H1 (cell line): ENCODE measurements at regions of chr5 and their contacts with region 1.

Region 1: DNA sequence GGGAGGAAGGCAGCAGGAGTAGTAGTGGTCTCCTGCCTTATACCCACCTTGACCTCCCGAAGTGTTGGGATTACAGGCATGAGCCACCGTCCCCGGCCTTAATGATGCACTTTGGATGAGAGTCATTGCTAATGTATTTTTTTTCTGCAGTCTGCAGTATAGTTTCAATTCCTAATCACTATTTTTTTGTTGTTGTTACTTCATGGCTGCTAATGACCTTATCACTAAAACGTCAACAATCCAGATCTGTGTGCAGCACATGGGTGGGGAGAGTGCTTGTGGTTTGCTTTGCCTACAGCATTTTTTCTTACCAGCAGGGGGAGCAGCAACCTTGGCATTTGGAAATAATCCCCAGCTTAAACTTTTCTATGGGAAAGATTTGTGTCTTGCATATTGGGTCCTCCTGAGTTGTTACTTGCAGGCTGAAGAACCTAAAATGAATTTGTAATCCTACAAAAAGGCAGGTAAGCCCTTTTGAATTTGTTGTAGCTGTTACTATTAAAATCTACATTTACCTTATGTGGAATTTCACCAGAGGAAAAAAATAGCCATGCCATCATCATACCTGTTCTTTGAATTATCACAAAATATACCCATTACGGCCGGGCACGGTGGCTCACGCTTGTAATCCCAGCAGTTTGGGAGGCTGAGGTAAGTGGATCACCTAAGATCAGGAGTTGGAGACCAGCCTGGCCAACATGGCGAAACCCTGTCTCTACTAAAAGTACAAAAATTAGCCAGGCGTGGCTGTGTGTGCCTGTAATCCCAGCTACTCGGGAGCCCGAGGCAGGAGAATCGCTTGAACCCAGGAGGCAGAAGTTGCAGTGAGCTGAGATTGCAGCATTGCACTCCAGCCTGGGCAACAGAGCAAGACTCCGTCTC is 6.3 kb upstream of the MED7 start:
- DNase-seq: peak; percentile 21 to 79
- H3K4me3 ChIP-seq: no peak overlapping the region
- H3K27ac ChIP-seq: no peak overlapping the region
- H3K4me1 ChIP-seq: no peaks in the 10 kb centered on the region
- H3K27me3 ChIP-seq: no peaks in the 10 kb centered on the region
- CTCF ChIP-seq: peak; percentile 47 to 82 (median 73)
- EP300 ChIP-seq: no peak
- POLR2A ChIP-seq: no peak
- RAD21 ChIP-seq: peak; percentile 77 to 82

Region 2: DNA sequence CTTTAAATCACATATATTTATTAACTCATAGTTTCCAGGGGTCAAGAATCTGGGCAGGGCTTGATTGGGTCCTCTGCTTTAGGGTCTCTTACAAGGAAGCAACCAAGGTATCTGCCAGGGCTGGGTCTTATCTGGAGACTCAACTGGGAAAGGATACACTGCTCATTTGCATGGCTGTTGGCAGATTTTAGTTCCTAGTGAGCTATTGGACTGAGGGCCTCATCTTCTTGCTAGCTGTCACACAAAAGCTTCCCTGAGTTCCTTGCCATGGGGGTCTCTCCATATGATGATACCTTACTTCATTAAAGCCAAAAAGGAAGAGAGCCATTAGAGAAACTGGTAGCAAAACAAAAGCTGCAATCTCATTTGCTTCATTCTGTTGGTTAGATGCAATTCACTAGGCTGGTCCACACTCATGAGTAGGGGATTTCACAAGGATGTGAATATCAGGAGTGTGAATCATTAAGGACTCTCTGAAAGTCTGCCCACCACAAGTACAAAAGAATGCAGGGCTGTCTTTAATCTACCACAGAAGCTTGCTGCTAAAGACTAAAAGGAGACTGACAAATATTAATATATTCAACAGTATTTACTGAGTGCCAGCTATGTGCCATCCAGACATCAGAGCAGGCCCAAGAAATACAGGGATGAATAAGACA is 144.0 kb before region 1 on chr5:
- CTCF ChIA-PET with region 1: no interaction called
- POLR2A ChIA-PET with region 1: no interaction called
- DNase-seq: no peak
- H3K4me3 ChIP-seq: no peak overlapping the region
- H3K27ac ChIP-seq: no peak overlapping the region
- H3K4me1 ChIP-seq: no peaks in the 10 kb centered on the region
- H3K27me3 ChIP-seq: no peaks in the 10 kb centered on the region
- CTCF ChIP-seq: no peak
- EP300 ChIP-seq: no peak
- POLR2A ChIP-seq: no peak
- RAD21 ChIP-seq: no peak

Region 3: DNA sequence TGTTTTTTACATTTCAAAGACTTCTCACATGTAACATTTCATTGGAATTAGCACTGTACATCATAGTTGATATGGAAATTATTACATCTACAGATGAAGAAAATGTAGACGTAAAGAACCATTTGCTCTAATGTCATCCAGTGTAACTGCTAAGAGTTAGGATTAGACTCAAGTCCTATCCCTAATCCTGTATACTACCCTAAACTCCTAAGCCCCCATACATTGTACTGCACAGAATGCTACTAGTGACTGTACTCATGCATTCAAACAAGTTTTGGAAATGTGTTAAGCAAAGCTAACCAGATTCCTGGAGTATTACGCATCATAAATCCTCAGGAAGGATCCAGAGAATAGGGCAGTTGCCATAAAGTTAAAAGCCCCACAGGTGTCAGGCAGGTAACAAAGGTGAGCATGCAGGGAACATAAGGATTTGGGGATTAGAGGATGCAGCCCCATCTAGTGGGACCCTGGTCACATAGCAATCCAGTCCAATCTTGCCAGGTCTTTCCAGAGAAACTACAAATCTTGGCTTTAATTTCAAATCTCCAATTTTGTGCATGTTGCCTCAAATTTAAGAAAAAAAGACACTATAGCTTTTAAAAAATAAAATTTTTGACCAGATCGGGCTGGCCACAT is 122.1 kb before region 1 on chr5:
- CTCF ChIA-PET with region 1: no interaction called
- POLR2A ChIA-PET with region 1: no interaction called
- DNase-seq: peak; percentile 38 to 52
- H3K4me3 ChIP-seq: no peak overlapping the region
- H3K27ac ChIP-seq: no peak overlapping the region
- H3K4me1 ChIP-seq: no peaks in the 10 kb centered on the region
- H3K27me3 ChIP-seq: no peaks in the 10 kb centered on the region; a peak in 1 of 7 replicates
- CTCF ChIP-seq: peak; percentile 51 to 90 (median 85)
- EP300 ChIP-seq: 0 out of 3 replicates have a peak, but pooled peaks of 1 of the 2 experiments have one; percentile 32
- POLR2A ChIP-seq: no peak
- RAD21 ChIP-seq: peak; percentile 86 to 91

Region 4: DNA sequence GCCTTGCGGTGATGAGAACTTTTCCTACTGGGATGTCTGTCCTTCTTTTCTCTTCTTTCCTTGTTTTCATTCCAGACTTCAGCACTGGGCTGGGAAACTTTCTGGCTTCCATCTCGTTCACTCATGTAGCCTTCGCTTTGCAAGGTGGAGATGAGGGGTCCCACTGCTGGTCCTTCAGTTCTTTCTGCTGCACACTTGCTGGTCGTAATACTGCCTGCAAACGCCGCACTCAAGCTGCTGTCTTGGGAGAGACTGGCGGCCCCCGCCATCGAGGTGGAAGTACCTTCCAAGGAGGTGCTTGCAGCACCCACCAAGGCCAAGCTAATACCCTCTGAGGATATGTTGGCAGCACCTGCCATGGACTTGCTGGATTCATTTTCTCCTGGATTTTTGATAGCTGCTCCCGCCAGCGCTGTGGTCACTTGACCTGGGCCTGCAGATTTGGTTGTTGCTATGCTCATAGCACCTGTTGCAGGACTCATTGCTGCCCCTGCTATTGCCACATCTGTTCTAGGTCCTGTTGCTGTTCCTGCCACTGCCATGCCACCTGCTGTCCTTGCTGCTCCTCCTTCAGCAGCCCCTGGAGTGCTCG is 14.0 kb after region 1 on chr5:
- CTCF ChIA-PET with region 1: interaction called, 16 read pairs
- POLR2A ChIA-PET with region 1: no interaction called
- DNase-seq: no peak
- H3K4me3 ChIP-seq: no peak overlapping the region
- H3K27ac ChIP-seq: no peak overlapping the region
- H3K4me1 ChIP-seq: no peaks in the 10 kb centered on the region
- H3K27me3 ChIP-seq: no peaks in the 10 kb centered on the region
- CTCF ChIP-seq: no peak
- EP300 ChIP-seq: no peak
- POLR2A ChIP-seq: no peak
- RAD21 ChIP-seq: no peak

Region 5: GRCh38 chr5:157265714-157266285 is 116.8 kb after region 1 on chr5 and contains the start of gene CYFIP2:
- CTCF ChIA-PET with region 1: interaction called, 10 read pairs
- POLR2A ChIA-PET with region 1: no interaction called
- DNase-seq: no peak
- H3K4me3 ChIP-seq: peak within 1 kb of the TSS; percentile 59 to 82 (median 68)
- H3K27ac ChIP-seq: peak within 1 kb of the TSS; percentile 60; the same call in 1 of the 2 replicates
- H3K4me1 ChIP-seq: peaks cover 8 to 19% (median 13%) of the 10 kb centered on the region in 4 experiments
- H3K27me3 ChIP-seq: no peaks in the 10 kb centered on the region; a peak in 2 of 7 replicates
- CTCF ChIP-seq: no peak
- EP300 ChIP-seq: no peak
- POLR2A ChIP-seq: peak in 1 of 2 experiments; percentile 73; a peak in 2 of 3 replicates
- RAD21 ChIP-seq: no peak
- total RNA-seq, gene CYFIP2: 80.6 and 85.3 TPM in 2 replicates